ENCODE measurements at regions of chr2 and their contacts with region 1.

Region 1: GRCh38 chr2:8544786-8545694 is 136.8 kb upstream of the ID2 start:
- DNase-seq: peak; percentile 95 to 98 (median 96)
- H3K4me3 ChIP-seq: peak overlapping the region in 1 of 3 experiments; percentile 33
- H3K4me3 Mint-ChIP-seq: peak overlapping the region; percentile 47 to 65
- H3K27ac ChIP-seq: peak overlapping the region; percentile 93 to 98
- H3K27ac Mint-ChIP-seq: peak overlapping the region; percentile 98 to 100 (median 99)
- H3K4me1 ChIP-seq: peaks cover 68 to 79% of the 10 kb centered on the region in 2 donors
- H3K4me1 Mint-ChIP-seq: peaks cover 77% of the 10 kb centered on the region
- H3K27me3 ChIP-seq: no peaks in the 10 kb centered on the region
- H3K27me3 Mint-ChIP-seq: peaks cover 2 to 4% (median 2%) of the 10 kb centered on the region in 3 donors
- CTCF ChIP-seq: peak; percentile 70

Region 2: DNA sequence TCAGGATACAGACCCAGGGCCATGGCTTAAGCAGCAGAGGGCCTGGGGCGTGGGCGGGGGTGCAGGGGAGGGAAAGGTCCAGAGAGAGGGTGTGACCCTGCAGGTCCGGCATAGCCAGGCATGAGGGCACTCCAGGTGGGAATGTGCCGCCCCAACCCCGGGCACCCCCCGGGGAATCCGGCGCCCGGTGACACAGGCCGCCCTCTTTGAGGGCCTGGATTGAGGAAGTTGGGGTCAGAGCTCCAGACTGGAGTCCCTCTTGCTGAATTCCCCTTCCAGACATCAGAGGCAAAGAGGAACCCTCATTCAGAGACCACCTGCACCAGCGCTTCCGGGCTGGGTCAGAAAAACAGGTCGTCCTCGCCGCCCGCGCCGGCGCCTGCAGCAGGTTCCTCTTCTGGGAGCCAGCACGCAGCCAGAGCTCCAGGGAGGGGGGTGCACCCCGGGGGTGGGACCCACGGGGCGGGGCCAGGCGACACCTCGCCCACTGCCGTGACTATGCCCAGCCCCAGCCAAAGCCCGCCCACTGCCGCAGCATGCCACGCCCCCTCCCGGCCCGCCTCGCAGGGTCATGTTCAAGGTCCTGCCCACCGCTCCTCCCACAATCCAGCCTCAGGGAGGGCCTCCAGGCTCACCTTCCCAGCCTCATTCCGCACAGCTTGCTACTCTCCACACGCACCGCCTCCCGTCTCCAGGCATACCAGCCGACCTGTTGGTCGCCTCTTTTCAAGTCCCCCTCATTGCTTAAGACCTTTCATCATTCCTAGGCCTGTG is 38.5 kb after region 1 on chr2:
- intact Hi-C with region 1: loop called (anchors 2 to 5 kb)
- DNase-seq: peak; percentile 97 to 100 (median 98)
- H3K4me3 ChIP-seq: peak overlapping the region; percentile 3 to 67 (median 22)
- H3K4me3 Mint-ChIP-seq: peak overlapping the region; percentile 80 to 91
- H3K27ac ChIP-seq: peak overlapping the region; percentile 74 to 87
- H3K27ac Mint-ChIP-seq: peak overlapping the region; percentile 92 to 98 (median 96)
- H3K4me1 ChIP-seq: peaks cover 21 to 42% of the 10 kb centered on the region in 2 donors
- H3K4me1 Mint-ChIP-seq: peaks cover 44% of the 10 kb centered on the region
- H3K27me3 ChIP-seq: no peaks in the 10 kb centered on the region
- H3K27me3 Mint-ChIP-seq: peaks cover 4 to 12% (median 11%) of the 10 kb centered on the region in 3 donors
- CTCF ChIP-seq: no peak

Region 3: DNA sequence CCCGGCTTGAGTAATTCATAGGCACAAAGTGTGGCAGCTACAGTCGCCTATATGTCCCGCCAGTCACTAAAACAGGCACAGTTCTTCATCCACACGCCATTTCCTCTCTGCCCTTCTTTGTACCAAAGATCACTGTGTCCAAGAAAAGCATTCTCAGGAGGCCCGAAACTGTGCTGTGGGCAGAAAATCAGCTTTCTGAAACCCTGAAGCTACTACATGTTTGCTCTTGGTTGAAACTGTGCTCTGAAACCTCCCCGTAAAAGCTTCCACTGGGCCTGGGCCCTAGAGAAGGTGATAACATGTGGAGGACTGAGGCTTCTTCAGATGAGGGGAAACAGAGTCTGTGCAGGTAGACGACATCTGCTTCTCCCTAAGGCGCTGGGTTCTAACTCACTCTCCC is 61.2 kb after region 1 on chr2:
- intact Hi-C with region 1: loop called in 1 of 2 experiments (anchors 1 kb)
- DNase-seq: no peak
- H3K4me3 ChIP-seq: no peak overlapping the region
- H3K4me3 Mint-ChIP-seq: no peak overlapping the region
- H3K27ac ChIP-seq: no peak overlapping the region
- H3K27ac Mint-ChIP-seq: peak overlapping the region in 1 of 7 donors; percentile 41
- H3K4me1 ChIP-seq: peaks cover 21 to 27% of the 10 kb centered on the region in 2 donors
- H3K4me1 Mint-ChIP-seq: peaks cover 29% of the 10 kb centered on the region
- H3K27me3 ChIP-seq: no peaks in the 10 kb centered on the region
- H3K27me3 Mint-ChIP-seq: peaks cover 0 to 4% (median 3%) of the 10 kb centered on the region in 3 donors
- CTCF ChIP-seq: no peak

Measured in CD14-positive monocyte (primary cell).